H1 (cell line): ENCODE measurements at regions of chr1 and their contacts with region 1.

Region 1: GRCh38 chr1:10459181-10459580 is 9.3 kb downstream of the CORT start:
- DNase-seq: no peak
- H3K4me3 ChIP-seq: no peak overlapping the region
- H3K27ac ChIP-seq: no peak overlapping the region
- H3K4me1 ChIP-seq: no peaks in the 10 kb centered on the region
- H3K27me3 ChIP-seq: no peaks in the 10 kb centered on the region
- CTCF ChIP-seq: no peak
- EP300 ChIP-seq: no peak
- POLR2A ChIP-seq: no peak
- RAD21 ChIP-seq: no peak

Region 2: DNA sequence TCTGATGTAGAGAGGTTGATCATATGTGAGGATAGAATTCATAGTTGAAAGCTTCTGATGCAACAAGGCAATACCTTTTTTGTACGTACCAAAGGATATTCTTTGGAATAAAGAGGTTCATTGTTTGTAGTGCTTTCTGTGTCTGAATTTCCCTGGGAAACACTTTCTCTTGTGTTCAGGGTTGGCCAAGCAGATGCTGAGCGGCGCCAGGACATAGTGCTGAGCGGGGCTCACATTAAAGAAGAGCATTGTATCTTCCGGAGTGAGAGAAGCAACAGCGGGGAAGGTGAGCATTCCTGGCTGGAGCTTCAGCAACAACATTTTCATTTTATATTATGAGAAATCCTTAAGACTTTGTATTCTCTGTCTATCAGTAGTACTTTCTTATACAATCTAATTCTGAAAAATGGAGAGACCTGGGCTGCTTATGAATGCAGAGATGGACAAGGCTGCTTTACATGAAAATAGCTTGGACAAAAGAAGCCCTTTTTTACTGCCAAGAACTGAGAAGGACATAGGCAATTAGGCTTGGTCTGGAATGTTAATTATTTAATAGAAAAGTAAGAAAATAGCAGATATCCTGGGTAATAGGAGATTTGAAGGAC is 163.6 kb before region 1 on chr1:
- CTCF ChIA-PET with region 1: no interaction called
- POLR2A ChIA-PET with region 1: no interaction called
- DNase-seq: no peak
- H3K4me3 ChIP-seq: no peak overlapping the region
- H3K27ac ChIP-seq: no peak overlapping the region
- H3K4me1 ChIP-seq: no peaks in the 10 kb centered on the region
- H3K27me3 ChIP-seq: no peaks in the 10 kb centered on the region
- CTCF ChIP-seq: no peak
- EP300 ChIP-seq: no peak
- POLR2A ChIP-seq: no peak
- RAD21 ChIP-seq: no peak

Region 3: DNA sequence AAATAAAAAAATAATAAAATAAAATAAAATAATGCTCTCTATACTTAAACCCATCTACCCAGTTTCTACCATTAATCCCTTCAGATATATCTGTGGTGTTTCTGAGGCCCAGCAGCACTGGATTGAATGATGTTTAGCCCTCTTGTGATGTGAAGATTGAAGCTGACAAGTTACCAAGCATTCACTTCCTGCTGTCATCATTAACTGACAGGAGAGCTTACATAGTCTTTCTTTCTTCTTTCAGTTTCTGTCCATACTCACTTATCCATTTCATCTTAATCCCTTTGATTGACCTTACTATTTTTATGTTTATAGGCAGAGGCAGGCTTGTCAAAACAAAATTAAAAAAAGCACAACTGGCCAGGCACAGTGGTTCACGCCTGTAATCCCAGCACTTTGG is 99.1 kb before region 1 on chr1:
- CTCF ChIA-PET with region 1: no interaction called
- POLR2A ChIA-PET with region 1: no interaction called
- DNase-seq: no peak
- H3K4me3 ChIP-seq: no peak overlapping the region
- H3K27ac ChIP-seq: no peak overlapping the region
- H3K4me1 ChIP-seq: no peaks in the 10 kb centered on the region
- H3K27me3 ChIP-seq: no peaks in the 10 kb centered on the region
- CTCF ChIP-seq: no peak
- EP300 ChIP-seq: no peak
- POLR2A ChIP-seq: no peak
- RAD21 ChIP-seq: no peak

Region 4: DNA sequence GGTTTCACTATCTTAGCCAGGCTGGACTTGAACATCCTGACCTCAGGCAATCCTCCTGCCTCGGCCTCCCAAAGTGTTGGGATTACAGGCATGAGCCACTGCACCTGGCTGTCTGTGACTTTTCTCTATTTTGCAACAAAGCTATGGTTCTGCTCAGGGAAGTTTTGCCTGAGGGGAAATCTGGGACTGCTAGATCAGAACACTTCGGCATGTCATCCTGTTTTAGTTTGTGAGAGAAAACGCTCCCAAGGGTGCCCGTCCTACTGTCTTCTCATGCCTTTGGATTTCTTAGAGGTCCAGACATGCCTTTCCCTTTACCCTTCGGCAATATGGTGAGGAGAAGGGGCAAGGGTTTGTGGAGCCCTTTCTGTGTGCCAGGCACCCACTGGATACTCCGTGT is 14.9 kb before region 1 on chr1:
- CTCF ChIA-PET with region 1: interaction called, 5 read pairs
- POLR2A ChIA-PET with region 1: interaction called, 29 read pairs
- DNase-seq: no peak
- H3K4me3 ChIP-seq: no peak overlapping the region
- H3K27ac ChIP-seq: no peak overlapping the region
- H3K4me1 ChIP-seq: no peaks in the 10 kb centered on the region
- H3K27me3 ChIP-seq: no peaks in the 10 kb centered on the region; a peak in 1 of 7 replicates
- CTCF ChIP-seq: no peak
- EP300 ChIP-seq: no peak
- POLR2A ChIP-seq: no peak
- RAD21 ChIP-seq: no peak

Region 5: DNA sequence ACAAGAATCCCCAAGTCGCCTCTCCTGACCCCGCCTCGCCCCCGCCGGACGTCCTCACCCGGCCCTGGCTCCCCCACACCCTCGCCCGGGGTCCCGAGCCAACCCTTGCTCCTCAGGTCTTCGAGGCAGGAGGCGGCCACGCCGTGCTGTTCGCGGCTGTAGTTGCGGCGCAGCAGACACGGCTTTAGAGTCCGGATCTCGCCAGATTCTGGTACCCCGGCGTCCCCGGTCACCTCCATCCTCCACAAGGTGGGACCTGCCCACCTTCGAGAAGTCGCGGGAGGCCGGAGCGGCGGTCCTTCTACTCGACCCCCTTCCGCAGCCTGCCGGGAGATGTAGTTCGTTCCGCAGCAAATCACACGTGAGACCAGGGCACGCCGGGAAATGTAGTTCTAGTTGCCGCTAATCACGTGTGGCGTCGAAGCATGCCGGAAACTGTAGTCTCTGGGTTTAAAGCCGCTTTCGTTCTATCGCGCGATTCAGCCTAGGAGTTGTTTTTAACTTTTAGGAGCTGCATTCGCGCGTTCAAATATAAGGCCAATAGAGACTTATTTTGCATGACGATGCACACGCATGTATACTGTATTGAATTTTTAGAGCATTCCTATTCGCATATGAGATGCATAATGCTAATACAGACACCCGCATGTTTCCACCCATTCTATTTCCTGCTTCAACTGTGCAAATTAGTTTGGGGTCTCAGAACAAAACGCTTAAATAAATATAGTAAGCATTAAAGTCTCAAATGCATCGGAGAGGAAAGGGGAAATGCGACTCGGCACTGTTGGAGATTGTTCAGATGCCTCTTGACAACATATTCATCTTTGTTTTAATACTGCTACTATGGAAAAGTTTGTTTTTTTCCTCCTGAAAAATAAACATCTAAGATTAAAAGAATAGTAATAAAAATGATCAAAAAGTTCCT is 13.3 kb after region 1 on chr1 and contains the start of gene DFFA:
- CTCF ChIA-PET with region 1: interaction called, 10 read pairs
- POLR2A ChIA-PET with region 1: interaction called, 67 read pairs
- DNase-seq: peak; percentile 94 to 95
- H3K4me3 ChIP-seq: peak within 1 kb of the TSS; percentile 77 to 91 (median 87)
- H3K27ac ChIP-seq: no peak within 1 kb of the TSS
- H3K4me1 ChIP-seq: no peaks in the 10 kb centered on the region; a peak in 3 of 7 replicates
- H3K27me3 ChIP-seq: no peaks in the 10 kb centered on the region
- CTCF ChIP-seq: no peak
- EP300 ChIP-seq: peak in 1 of 2 experiments; percentile 32; a peak in 1 of 3 replicates
- POLR2A ChIP-seq: peak; percentile 69 to 91
- RAD21 ChIP-seq: peak in 1 of 2 experiments; percentile 8; a peak in 1 of 4 replicates
- total RNA-seq, gene DFFA: 78.3 and 79.9 TPM in 2 replicates